Natural killer cell (primary cell): ENCODE measurements at regions of chr6 and their contacts with region 1.

Region 1: DNA sequence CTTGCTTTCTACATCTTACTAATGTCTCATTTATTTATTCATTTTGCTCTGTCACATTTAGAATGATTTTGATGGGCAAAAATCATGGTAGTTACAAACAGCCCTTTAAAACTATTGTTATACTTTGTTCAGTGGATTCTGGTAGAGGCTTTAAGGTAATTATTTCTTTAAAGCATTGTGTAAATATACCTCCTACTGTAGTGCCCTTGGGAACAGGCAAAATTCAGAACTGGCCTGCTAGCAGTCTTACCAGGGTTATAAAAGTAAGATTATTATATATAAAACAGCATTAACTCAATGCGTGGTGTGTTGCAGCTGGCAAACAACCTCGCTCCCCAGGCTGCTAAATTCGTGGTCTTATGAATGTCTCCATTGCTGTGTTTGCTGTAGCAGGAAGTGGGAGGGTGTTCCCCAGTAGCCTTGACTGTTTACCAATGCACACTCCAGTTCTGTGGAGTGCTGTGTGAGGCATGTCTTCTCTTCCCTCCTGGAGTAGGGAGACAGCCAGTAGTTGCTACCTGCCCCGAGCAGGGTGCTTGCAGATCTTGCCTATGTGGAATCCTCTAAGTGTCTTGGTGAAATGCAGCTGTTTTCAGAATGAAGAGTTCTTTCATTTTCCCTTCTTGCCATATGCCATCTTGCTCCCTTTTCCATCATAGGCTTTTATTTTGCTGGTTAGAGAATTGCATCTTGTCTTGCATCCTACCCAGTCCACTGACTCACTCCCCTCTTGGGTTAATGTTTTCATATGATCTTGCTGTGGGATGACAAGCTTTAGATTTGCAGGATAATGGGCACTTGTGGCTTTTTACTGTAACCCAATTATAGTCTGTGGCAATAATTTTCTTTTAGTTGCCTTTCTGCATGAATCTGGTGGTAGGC is 45.3 kb downstream of the IGF2R start:
- DNase-seq: peak in 1 of 2 donors; percentile 59
- ATAC-seq: peak; percentile 63 to 74 (median 73)
- H3K4me3 ChIP-seq: no peak overlapping the region
- H3K4me3 Mint-ChIP-seq: peak overlapping the region; percentile 75
- H3K27ac ChIP-seq: peak overlapping the region; percentile 15
- H3K27ac Mint-ChIP-seq: peak overlapping the region; percentile 81 to 96
- H3K4me1 ChIP-seq: peaks cover 27% of the 10 kb centered on the region
- H3K4me1 Mint-ChIP-seq: peaks cover 82 to 85% of the 10 kb centered on the region in 2 donors
- H3K27me3 ChIP-seq: no peaks in the 10 kb centered on the region
- H3K27me3 Mint-ChIP-seq: no peaks in the 10 kb centered on the region
- CTCF ChIP-seq: no peak

Region 2: DNA sequence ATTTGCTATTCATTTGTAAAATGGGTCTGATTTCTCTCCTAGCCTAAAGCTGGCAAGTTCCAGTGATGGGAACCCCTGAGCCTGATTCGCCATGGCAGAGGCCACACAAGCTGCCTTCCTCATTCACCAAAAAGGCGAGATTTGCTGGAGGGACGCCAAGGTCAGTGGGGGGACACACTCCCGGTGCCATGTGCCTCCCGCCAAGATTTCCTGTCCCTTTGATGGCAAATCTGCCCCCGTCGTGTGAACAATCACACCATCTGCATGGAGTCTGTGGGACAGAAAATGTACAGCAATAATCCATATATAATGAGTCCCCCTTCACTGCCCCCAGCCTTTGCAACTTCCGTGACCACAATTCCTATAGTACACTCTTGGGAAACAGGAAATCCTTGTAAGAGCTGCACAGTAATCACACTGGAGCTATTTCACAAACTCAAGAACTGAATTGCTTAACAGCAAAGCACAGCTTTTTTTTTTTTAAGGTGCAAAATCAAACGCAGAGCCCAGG is 61.1 kb before region 1 on chr6:
- intact Hi-C with region 1: no loop called
- DNase-seq: no peak
- ATAC-seq: no peak
- H3K4me3 ChIP-seq: no peak overlapping the region
- H3K4me3 Mint-ChIP-seq: no peak overlapping the region
- H3K27ac ChIP-seq: no peak overlapping the region
- H3K27ac Mint-ChIP-seq: no peak overlapping the region
- H3K4me1 ChIP-seq: peaks cover 6% of the 10 kb centered on the region
- H3K4me1 Mint-ChIP-seq: peaks cover 0 to 7% of the 10 kb centered on the region in 2 donors
- H3K27me3 ChIP-seq: peaks cover 3% of the 10 kb centered on the region
- H3K27me3 Mint-ChIP-seq: peaks cover 8 to 32% of the 10 kb centered on the region in 2 donors
- CTCF ChIP-seq: no peak

Region 3: GRCh38 chr6:159969921-159970320 is 44.3 kb before region 1 on chr6:
- intact Hi-C with region 1: loop called (anchors 2 kb)
- DNase-seq: peak; percentile 41 to 61
- ATAC-seq: peak; percentile 19 to 44 (median 43)
- H3K4me3 ChIP-seq: peak overlapping the region; percentile 64
- H3K4me3 Mint-ChIP-seq: peak overlapping the region; percentile 96
- H3K27ac ChIP-seq: peak overlapping the region; percentile 62
- H3K27ac Mint-ChIP-seq: peak overlapping the region; percentile 94 to 99
- H3K4me1 ChIP-seq: peaks cover 43% of the 10 kb centered on the region
- H3K4me1 Mint-ChIP-seq: peaks cover 47 to 48% of the 10 kb centered on the region in 2 donors
- H3K27me3 ChIP-seq: no peaks in the 10 kb centered on the region
- H3K27me3 Mint-ChIP-seq: no peaks in the 10 kb centered on the region
- CTCF ChIP-seq: no peak

Region 4: DNA sequence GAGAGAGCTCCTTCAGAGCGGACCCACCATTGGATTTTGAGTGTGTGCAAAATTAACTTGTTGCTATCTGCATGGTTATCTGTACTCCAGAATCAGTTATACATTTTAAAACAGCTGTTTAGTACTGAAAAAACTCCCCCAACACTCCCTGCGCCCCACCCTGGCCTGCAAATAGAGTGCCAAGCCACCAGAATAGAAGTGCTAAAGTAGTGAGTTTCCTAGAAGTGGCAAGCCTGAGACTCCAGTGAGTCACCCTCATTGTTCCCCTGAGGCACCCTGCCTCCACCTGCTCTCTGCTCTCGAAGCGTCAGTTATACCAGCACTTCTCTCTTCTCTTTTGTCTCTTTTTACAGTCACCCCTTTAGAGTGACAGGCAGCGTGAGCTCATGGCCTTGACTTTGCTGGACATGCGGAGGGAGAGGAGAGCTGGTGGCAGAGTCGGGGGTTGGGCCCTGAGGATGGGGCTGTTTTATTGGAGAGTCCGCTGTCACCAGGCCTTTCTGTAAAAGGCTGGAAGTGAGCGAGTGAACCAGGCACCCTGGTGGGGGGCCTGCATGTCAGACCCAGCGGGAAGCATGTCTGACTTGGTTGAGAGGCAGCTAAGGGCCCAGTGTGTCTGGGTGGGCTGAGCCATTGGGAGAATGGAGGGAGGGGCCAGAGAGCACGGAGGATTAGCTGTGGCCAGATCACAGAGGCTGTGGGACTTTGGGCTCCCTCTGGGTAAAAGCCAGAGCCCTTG is 34.9 kb before region 1 on chr6:
- intact Hi-C with region 1: loop called (anchors 2 kb)
- DNase-seq: peak; percentile 74 to 77
- ATAC-seq: peak; percentile 68 to 86 (median 80)
- H3K4me3 ChIP-seq: no peak overlapping the region
- H3K4me3 Mint-ChIP-seq: peak overlapping the region; percentile 94
- H3K27ac ChIP-seq: peak overlapping the region; percentile 93
- H3K27ac Mint-ChIP-seq: peak overlapping the region; percentile 94 to 99
- H3K4me1 ChIP-seq: peaks cover 81% of the 10 kb centered on the region
- H3K4me1 Mint-ChIP-seq: peaks cover 97 to 100% of the 10 kb centered on the region in 2 donors
- H3K27me3 ChIP-seq: no peaks in the 10 kb centered on the region
- H3K27me3 Mint-ChIP-seq: no peaks in the 10 kb centered on the region
- CTCF ChIP-seq: no peak